HCT116 (cell line): ENCODE measurements at regions of chr3 and their contacts with region 1.

Region 1: GRCh38 chr3:94285870-94286269 is 223.0 kb downstream of the NSUN3 start:
- DNase-seq: no peak
- ATAC-seq: peak; percentile 49; the same call in 1 of the 2 replicates
- H3K4me3 ChIP-seq: no peak overlapping the region
- H3K27ac ChIP-seq: no peak overlapping the region
- H3K4me1 ChIP-seq: no peaks in the 10 kb centered on the region
- H3K27me3 ChIP-seq: no peaks in the 10 kb centered on the region
- CTCF ChIP-seq: peak in 1 of 3 experiments; percentile 41; a peak in 1 of 6 replicates
- POLR2A ChIP-seq: no peak
- RAD21 ChIP-seq: no peak

Region 2: GRCh38 chr3:94115482-94115881 is 170.4 kb before region 1 on chr3:
- CTCF ChIA-PET with region 1: interaction called, 3 read pairs
- POLR2A ChIA-PET with region 1: no interaction called
- RAD21 ChIA-PET with region 1: no interaction called
- intact Hi-C with region 1: loop called (anchors 2 kb)
- DNase-seq: peak; percentile 3
- ATAC-seq: 0 out of 2 replicates have a peak, but pooled peaks have one; percentile 42
- H3K4me3 ChIP-seq: no peak overlapping the region
- H3K27ac ChIP-seq: no peak overlapping the region
- H3K4me1 ChIP-seq: no peaks in the 10 kb centered on the region
- H3K27me3 ChIP-seq: no peaks in the 10 kb centered on the region
- CTCF ChIP-seq: peak; percentile 16 to 48 (median 29); a peak in 4 of 6 replicates
- POLR2A ChIP-seq: no peak
- RAD21 ChIP-seq: peak; percentile 43; the same call in 1 of the 2 replicates

Region 3: DNA sequence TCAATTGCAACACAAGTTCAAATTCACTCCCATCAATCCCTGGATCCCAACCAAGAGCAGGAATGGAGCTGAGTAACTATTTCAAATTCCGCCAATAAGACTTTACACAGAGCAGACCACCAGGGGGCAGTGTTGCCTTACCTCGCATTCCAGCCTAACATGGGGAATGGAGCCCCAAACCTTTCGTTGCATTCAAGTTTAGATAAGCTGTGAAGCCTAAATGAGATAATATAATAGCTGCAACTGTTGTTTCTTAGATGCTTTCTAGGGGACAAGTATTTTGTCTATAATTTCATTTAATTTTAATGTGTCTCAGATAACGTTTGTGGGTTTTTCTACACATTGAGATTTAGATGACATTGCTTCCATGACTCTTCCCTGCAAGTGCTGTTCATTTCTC is 36.3 kb before region 1 on chr3:
- CTCF ChIA-PET with region 1: interaction called, 6 read pairs
- POLR2A ChIA-PET with region 1: no interaction called
- RAD21 ChIA-PET with region 1: no interaction called
- intact Hi-C with region 1: loop called (anchors 5 kb)
- DNase-seq: peak; percentile 35
- ATAC-seq: peak; percentile 73
- H3K4me3 ChIP-seq: no peak overlapping the region
- H3K27ac ChIP-seq: no peak overlapping the region
- H3K4me1 ChIP-seq: no peaks in the 10 kb centered on the region
- H3K27me3 ChIP-seq: peaks cover 32% of the 10 kb centered on the region
- CTCF ChIP-seq: peak; percentile 31 to 92 (median 76); a peak in 5 of 6 replicates
- POLR2A ChIP-seq: no peak
- RAD21 ChIP-seq: peak; percentile 55

Region 4: DNA sequence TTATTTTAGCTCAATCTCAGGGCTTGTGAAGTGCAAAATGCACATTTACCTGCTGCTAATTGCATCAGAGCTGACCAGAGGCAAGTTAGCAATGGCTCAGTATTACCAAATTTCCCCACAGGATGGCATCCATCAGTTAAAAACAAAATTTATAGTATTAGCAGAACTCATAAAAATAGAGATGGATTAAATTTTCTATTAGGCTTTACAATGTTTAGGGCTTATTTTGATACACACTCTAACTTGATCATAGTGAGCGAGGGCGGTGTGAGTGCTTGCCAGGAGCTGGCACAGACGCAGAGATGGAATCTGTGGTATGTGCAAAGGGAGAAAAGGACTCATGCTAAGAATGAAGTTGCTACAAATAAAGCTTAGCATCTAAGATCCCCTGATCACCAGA is 18.0 kb after region 1 on chr3:
- CTCF ChIA-PET with region 1: no interaction called
- POLR2A ChIA-PET with region 1: no interaction called
- RAD21 ChIA-PET with region 1: no interaction called
- intact Hi-C with region 1: no loop called
- DNase-seq: no peak
- ATAC-seq: no peak
- H3K4me3 ChIP-seq: no peak overlapping the region
- H3K27ac ChIP-seq: no peak overlapping the region
- H3K4me1 ChIP-seq: no peaks in the 10 kb centered on the region
- H3K27me3 ChIP-seq: 0 out of 2 replicates have a peak, but pooled peaks cover 6% of the 10 kb centered on the region
- CTCF ChIP-seq: 0 out of 6 replicates have a peak, but pooled peaks of 1 of the 3 experiments have one; percentile 20
- POLR2A ChIP-seq: no peak
- RAD21 ChIP-seq: no peak

Region 5: GRCh38 chr3:94716326-94717010 is 430.6 kb after region 1 on chr3:
- CTCF ChIA-PET with region 1: no interaction called
- POLR2A ChIA-PET with region 1: no interaction called
- RAD21 ChIA-PET with region 1: no interaction called
- intact Hi-C with region 1: no loop called
- DNase-seq: no peak
- ATAC-seq: no peak
- H3K4me3 ChIP-seq: no peak overlapping the region
- H3K27ac ChIP-seq: no peak overlapping the region
- H3K4me1 ChIP-seq: no peaks in the 10 kb centered on the region
- H3K27me3 ChIP-seq: no peaks in the 10 kb centered on the region
- CTCF ChIP-seq: no peak
- POLR2A ChIP-seq: no peak
- RAD21 ChIP-seq: no peak